IMR-90 (cell line): ENCODE measurements at regions of chr4 and their contacts with region 1.

Region 1: GRCh38 chr4:52659001-52659721 is at the start of gene USP46:
- DNase-seq: peak; percentile 69
- ATAC-seq: peak; percentile 92
- H3K4me3 ChIP-seq: peak within 1 kb of the TSS; percentile 99
- H3K27ac ChIP-seq: peak within 1 kb of the TSS; percentile 99
- H3K4me1 ChIP-seq: peaks cover 4% of the 10 kb centered on the region
- H3K27me3 ChIP-seq: no peaks in the 10 kb centered on the region
- CTCF ChIP-seq: no peak
- POLR2A ChIP-seq: no peak
- RAD21 ChIP-seq: no peak
- total RNA-seq, gene USP46: 15.4 and 20.3 TPM in 2 replicates

Region 2: GRCh38 chr4:52861879-52862616 is 202.9 kb after region 1 on chr4 and contains the start of gene RASL11B:
- CTCF ChIA-PET with region 1: no interaction called
- POLR2A ChIA-PET with region 1: no interaction called
- dilution Hi-C with region 1: no loop called
- in situ Hi-C with region 1: no loop called
- intact Hi-C with region 1: loop called (anchors 10 kb)
- DNase-seq: peak; percentile 52
- ATAC-seq: peak; percentile 98
- H3K4me3 ChIP-seq: peak within 1 kb of the TSS; percentile 89
- H3K27ac ChIP-seq: peak within 1 kb of the TSS; percentile 55; the same call in 1 of the 2 replicates
- H3K4me1 ChIP-seq: peaks cover 9% of the 10 kb centered on the region
- H3K27me3 ChIP-seq: peaks cover 8% of the 10 kb centered on the region
- CTCF ChIP-seq: no peak; the same call in 1 of the 2 replicates
- POLR2A ChIP-seq: no peak; the same call in 1 of the 2 replicates
- RAD21 ChIP-seq: no peak
- total RNA-seq, gene RASL11B: 0.18 and 0.28 TPM in 2 replicates